WTC11 (cell line): ENCODE measurements at regions of chr4 and their contacts with region 1.

Region 1: DNA sequence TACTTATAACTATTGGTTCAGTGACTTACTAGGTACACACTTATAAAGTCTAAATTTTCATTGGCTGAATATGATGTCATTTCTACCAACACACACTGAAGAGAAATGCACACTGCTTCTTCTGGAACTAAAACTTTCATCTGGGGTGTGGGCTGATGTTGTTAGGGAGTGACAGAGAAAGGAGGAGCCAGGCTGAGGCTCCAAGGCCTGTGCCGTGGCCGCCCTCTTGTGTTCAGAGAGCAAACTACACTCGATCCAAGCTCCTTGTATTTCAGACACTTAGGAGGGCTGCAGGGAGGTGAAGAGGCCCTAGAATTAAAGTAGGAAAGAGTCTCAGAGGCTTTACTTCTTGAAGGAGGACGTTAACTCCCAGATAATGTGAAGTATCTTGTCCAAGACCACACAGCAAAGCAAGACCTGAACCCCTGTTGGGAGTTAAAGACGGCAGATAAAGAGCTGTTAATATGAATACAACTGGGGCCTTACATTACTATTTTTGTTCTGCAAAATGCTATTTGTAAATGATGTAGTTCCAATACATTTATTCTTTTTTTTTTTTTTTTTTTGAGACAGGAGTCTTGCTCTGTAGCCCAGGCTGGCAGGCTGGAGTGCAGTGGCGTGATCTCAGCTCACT is 137.5 kb downstream of the AFAP1 start:
- DNase-seq: peak; percentile 91
- ATAC-seq: peak; percentile 76
- H3K4me3 Mint-ChIP-seq: no peak overlapping the region
- H3K27ac Mint-ChIP-seq: peak overlapping the region; percentile 89; the same call in 1 of the 2 replicates
- H3K4me1 Mint-ChIP-seq: peaks cover 32% of the 10 kb centered on the region
- H3K27me3 Mint-ChIP-seq: no peaks in the 10 kb centered on the region
- CTCF ChIP-seq: peak; percentile 77

Region 2: DNA sequence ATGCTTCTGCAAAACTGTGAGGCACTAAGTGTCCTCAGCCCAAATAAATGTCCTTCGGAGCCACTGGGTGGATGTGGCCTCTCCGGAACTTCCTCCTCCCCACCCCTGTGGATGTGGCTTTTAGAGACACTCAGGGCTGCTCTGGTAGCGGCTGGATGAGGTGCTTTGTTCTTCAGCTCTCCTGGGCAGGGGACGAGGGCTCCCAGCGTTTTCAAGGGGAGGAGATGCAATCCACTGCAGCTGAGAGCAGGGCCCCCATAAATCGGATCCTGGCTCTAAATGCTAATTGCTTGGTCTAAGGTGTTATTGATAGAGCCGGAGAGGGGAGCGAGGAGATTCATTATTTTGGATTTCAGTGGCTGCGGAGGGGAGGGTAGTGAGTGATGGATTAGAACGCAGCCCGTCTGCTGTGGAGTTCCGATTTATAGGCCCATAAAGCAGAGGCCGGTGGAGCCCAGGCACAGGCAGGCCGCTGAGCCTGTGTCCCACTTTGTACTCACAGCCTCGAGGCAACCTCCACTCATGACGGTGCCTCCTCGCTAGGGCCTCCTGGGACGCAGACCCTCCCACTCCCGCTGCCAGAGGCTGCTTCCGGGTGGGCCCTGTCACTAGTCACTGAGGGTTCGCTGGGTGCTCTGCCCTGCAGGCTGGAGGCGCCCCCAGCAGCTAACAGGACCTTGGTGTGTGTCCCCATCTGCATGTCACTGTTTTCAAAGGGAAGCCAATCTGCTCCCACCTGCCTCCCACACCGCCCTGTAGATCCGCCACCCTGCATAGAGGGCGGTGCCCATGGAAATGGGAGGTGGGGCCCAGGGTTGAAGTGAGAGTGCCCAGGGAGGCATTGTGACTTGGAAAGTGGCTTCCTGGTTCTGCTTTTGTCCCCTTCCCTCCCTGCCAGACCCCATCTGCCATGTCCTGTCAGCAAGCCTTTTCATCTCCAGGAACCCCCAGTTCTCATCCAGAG is 232.1 kb before region 1 on chr4:
- CTCF ChIA-PET with region 1: no interaction called
- POLR2A ChIA-PET with region 1: no interaction called
- DNase-seq: no peak
- ATAC-seq: peak; percentile 56
- H3K4me3 Mint-ChIP-seq: no peak overlapping the region
- H3K27ac Mint-ChIP-seq: no peak overlapping the region
- H3K4me1 Mint-ChIP-seq: peaks cover 10% of the 10 kb centered on the region
- H3K27me3 Mint-ChIP-seq: peaks cover 2% of the 10 kb centered on the region; the same call in 1 of the 2 replicates
- CTCF ChIP-seq: no peak

Region 3: GRCh38 chr4:7673121-7673520 is 129.1 kb before region 1 on chr4:
- CTCF ChIA-PET with region 1: no interaction called
- POLR2A ChIA-PET with region 1: no interaction called
- DNase-seq: no peak
- ATAC-seq: no peak
- H3K4me3 Mint-ChIP-seq: no peak overlapping the region
- H3K27ac Mint-ChIP-seq: no peak overlapping the region
- H3K4me1 Mint-ChIP-seq: no peaks in the 10 kb centered on the region; the same call in 1 of the 2 replicates
- H3K27me3 Mint-ChIP-seq: no peaks in the 10 kb centered on the region
- CTCF ChIP-seq: no peak

Region 4: DNA sequence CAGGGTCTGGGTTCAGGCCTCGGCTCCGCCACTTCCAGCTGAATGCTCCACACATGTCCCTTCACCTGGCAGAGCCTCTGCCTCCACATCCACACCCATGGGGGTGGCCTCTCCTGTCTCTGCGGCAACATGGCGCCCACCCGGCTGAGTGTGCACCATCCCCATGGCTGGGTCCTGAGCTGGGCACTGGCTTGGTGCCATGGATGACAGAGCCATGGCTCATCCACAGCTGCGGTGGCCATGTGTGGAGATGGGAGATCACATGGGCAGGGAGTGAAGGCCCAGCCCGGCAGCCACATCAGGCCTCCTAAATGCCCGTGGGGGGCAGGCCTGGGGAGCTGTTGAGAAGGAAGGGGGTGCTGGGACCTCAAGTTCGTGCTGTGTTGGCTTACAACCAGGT is 76.3 kb before region 1 on chr4:
- CTCF ChIA-PET with region 1: no interaction called
- POLR2A ChIA-PET with region 1: no interaction called
- DNase-seq: no peak
- ATAC-seq: no peak
- H3K4me3 Mint-ChIP-seq: no peak overlapping the region
- H3K27ac Mint-ChIP-seq: no peak overlapping the region
- H3K4me1 Mint-ChIP-seq: no peaks in the 10 kb centered on the region
- H3K27me3 Mint-ChIP-seq: no peaks in the 10 kb centered on the region
- CTCF ChIP-seq: no peak

Region 5: GRCh38 chr4:7770224-7771050 is 31.8 kb before region 1 on chr4:
- CTCF ChIA-PET with region 1: interaction called, 41 read pairs
- POLR2A ChIA-PET with region 1: interaction called, 4 read pairs
- DNase-seq: peak; percentile 52
- ATAC-seq: peak; percentile 59
- H3K4me3 Mint-ChIP-seq: no peak overlapping the region
- H3K27ac Mint-ChIP-seq: peak overlapping the region; percentile 28; the same call in 1 of the 2 replicates
- H3K4me1 Mint-ChIP-seq: peaks cover 16% of the 10 kb centered on the region
- H3K27me3 Mint-ChIP-seq: no peaks in the 10 kb centered on the region
- CTCF ChIP-seq: peak; percentile 36; the same call in 1 of the 2 replicates

Region 6: GRCh38 chr4:7821245-7822136 is 19.3 kb after region 1 on chr4:
- CTCF ChIA-PET with region 1: interaction called, 34 read pairs
- POLR2A ChIA-PET with region 1: no interaction called
- DNase-seq: no peak
- ATAC-seq: no peak
- H3K4me3 Mint-ChIP-seq: no peak overlapping the region
- H3K27ac Mint-ChIP-seq: peak overlapping the region; percentile 28; the same call in 1 of the 2 replicates
- H3K4me1 Mint-ChIP-seq: peaks cover 40% of the 10 kb centered on the region
- H3K27me3 Mint-ChIP-seq: no peaks in the 10 kb centered on the region
- CTCF ChIP-seq: no peak

Region 7: GRCh38 chr4:7843831-7844593 is 41.8 kb after region 1 on chr4:
- CTCF ChIA-PET with region 1: interaction called, 109 read pairs
- POLR2A ChIA-PET with region 1: no interaction called
- DNase-seq: peak; percentile 91
- ATAC-seq: peak; percentile 97
- H3K4me3 Mint-ChIP-seq: no peak overlapping the region
- H3K27ac Mint-ChIP-seq: peak overlapping the region; percentile 89; the same call in 1 of the 2 replicates
- H3K4me1 Mint-ChIP-seq: peaks cover 35% of the 10 kb centered on the region
- H3K27me3 Mint-ChIP-seq: no peaks in the 10 kb centered on the region
- CTCF ChIP-seq: peak; percentile 77

Region 8: DNA sequence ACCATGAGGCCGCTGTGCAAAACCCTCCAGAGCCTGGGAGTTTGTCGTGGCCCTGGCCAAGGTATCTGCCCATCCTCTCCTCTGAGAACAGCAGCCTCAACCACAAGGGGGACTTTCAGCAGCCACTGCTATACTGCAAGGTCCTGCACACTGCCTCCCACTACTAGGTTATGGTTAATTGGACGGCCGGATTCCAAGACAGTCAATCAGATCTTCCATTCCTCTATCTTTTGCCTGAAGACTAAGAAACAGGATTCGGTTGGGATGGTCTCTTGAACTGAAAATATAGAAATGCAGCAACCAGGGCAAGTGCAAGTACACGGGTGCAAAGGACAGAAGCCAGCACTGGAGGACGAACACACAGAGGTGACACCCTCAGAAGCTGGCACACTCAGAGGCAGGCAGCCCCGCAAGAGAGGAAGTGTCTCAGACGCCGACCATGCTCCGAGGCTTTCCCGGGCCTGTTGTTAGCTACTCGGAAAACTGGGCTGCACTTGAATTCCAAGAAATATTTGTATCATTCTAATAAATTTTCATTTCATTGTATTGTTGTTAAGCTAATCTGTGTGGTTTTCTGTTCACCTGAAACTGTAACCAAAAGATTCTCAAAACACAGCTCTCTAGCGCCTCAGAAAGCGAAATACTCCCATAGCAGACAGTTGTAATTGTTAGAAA is 74.1 kb after region 1 on chr4:
- CTCF ChIA-PET with region 1: interaction called, 29 read pairs
- POLR2A ChIA-PET with region 1: interaction called, 4 read pairs
- DNase-seq: peak; percentile 54
- ATAC-seq: peak; percentile 98
- H3K4me3 Mint-ChIP-seq: no peak overlapping the region
- H3K27ac Mint-ChIP-seq: peak overlapping the region; percentile 6; the same call in 1 of the 2 replicates
- H3K4me1 Mint-ChIP-seq: peaks cover 54% of the 10 kb centered on the region
- H3K27me3 Mint-ChIP-seq: no peaks in the 10 kb centered on the region
- CTCF ChIP-seq: no peak

Region 9: DNA sequence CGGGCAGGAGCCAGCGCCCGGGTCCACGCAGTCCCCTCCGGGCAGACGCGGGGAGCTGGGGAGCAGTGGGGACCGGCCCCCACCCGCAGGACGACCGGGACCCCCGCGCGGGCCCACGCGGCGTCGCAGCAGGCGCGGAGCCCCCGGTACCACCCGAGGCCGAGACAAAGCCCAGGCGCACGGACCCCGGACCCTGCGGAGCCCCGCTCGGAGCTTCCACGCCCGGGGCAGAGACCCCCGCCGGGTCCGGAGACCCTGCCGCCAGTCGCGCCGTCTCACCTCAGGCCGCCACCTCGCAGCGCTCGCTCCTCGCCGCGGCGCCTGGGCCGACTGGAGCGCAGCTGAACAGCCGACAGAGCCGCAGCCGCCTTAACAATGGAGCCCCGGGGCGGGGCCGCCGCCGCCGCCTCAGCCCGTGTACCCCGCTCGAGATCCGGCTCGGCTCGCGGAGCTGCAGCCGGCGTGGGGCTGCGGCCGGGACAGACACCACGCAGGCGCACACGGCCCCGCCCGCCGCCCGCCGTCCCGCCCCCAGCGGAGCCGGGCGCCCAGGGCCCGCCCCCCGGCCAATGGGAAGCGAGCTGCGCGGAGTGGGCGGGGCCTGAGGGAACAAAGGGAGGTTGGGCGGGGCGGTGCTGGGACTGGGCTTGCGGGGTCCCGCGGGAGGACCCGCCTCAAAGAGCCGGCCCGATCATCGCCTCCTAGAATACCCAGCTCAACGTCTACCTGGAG is 137.3 kb after region 1 on chr4 and contains the start of gene AFAP1:
- CTCF ChIA-PET with region 1: interaction called, 74 read pairs
- POLR2A ChIA-PET with region 1: no interaction called
- DNase-seq: peak; percentile 94
- ATAC-seq: peak; percentile 91
- H3K4me3 Mint-ChIP-seq: peak within 1 kb of the TSS; percentile 77
- H3K27ac Mint-ChIP-seq: no peak within 1 kb of the TSS
- H3K4me1 Mint-ChIP-seq: peaks cover 47% of the 10 kb centered on the region
- H3K27me3 Mint-ChIP-seq: peaks cover 5% of the 10 kb centered on the region
- CTCF ChIP-seq: no peak
- total RNA-seq, gene AFAP1: 17.6 to 23.6 TPM (median 18.0 TPM) in 3 replicates

Region 10: GRCh38 chr4:7987148-7987989 is 185.2 kb after region 1 on chr4:
- CTCF ChIA-PET with region 1: interaction called, 116 read pairs
- POLR2A ChIA-PET with region 1: interaction called, 4 read pairs
- DNase-seq: peak; percentile 87
- ATAC-seq: peak; percentile 81
- H3K4me3 Mint-ChIP-seq: no peak overlapping the region
- H3K27ac Mint-ChIP-seq: peak overlapping the region; percentile 69; the same call in 1 of the 2 replicates
- H3K4me1 Mint-ChIP-seq: peaks cover 21% of the 10 kb centered on the region
- H3K27me3 Mint-ChIP-seq: no peaks in the 10 kb centered on the region
- CTCF ChIP-seq: peak; percentile 91

Region 11: GRCh38 chr4:8058031-8058479 is 255.8 kb after region 1 on chr4:
- CTCF ChIA-PET with region 1: no interaction called
- POLR2A ChIA-PET with region 1: no interaction called
- DNase-seq: no peak
- ATAC-seq: no peak
- H3K4me3 Mint-ChIP-seq: no peak overlapping the region
- H3K27ac Mint-ChIP-seq: no peak overlapping the region
- H3K4me1 Mint-ChIP-seq: no peaks in the 10 kb centered on the region
- H3K27me3 Mint-ChIP-seq: peaks cover 4% of the 10 kb centered on the region; the same call in 1 of the 2 replicates
- CTCF ChIP-seq: no peak